Endothelial cell of umbilical vein (primary cell): ENCODE measurements at regions of chr10 and their contacts with region 1.

Region 1: GRCh38 chr10:69392481-69393000 is 24.2 kb downstream of the TACR2 start:
- DNase-seq: peak; percentile 78
- H3K4me3 ChIP-seq: no peak overlapping the region
- H3K27ac ChIP-seq: no peak overlapping the region
- H3K4me1 ChIP-seq: peaks cover 4% of the 10 kb centered on the region
- H3K27me3 ChIP-seq: no peaks in the 10 kb centered on the region
- CTCF ChIP-seq: peak; percentile 92 to 93
- POLR2A ChIP-seq: no peak

Region 2: GRCh38 chr10:69237528-69238159 is 154.9 kb before region 1 on chr10:
- CTCF ChIA-PET with region 1: interaction called, 103 read pairs
- POLR2A ChIA-PET with region 1: no interaction called
- dilution Hi-C with region 1: loop called (anchors 25 kb)
- intact Hi-C with region 1: loop called (anchors 1 kb)
- DNase-seq: peak; percentile 81
- H3K4me3 ChIP-seq: no peak overlapping the region
- H3K27ac ChIP-seq: no peak overlapping the region
- H3K4me1 ChIP-seq: peaks cover 16% of the 10 kb centered on the region
- H3K27me3 ChIP-seq: no peaks in the 10 kb centered on the region
- CTCF ChIP-seq: peak; percentile 81 to 90
- POLR2A ChIP-seq: no peak

Region 3: GRCh38 chr10:69318106-69318866 is 74.3 kb before region 1 on chr10:
- CTCF ChIA-PET with region 1: interaction called, 10 read pairs
- POLR2A ChIA-PET with region 1: no interaction called
- dilution Hi-C with region 1: no loop called
- intact Hi-C with region 1: loop called (anchors 1 kb)
- DNase-seq: peak; percentile 86
- H3K4me3 ChIP-seq: peak overlapping the region; percentile 47 to 92 (median 70)
- H3K27ac ChIP-seq: peak overlapping the region; percentile 84
- H3K4me1 ChIP-seq: peaks cover 48% of the 10 kb centered on the region
- H3K27me3 ChIP-seq: no peaks in the 10 kb centered on the region
- CTCF ChIP-seq: no peak
- POLR2A ChIP-seq: no peak

Region 4: DNA sequence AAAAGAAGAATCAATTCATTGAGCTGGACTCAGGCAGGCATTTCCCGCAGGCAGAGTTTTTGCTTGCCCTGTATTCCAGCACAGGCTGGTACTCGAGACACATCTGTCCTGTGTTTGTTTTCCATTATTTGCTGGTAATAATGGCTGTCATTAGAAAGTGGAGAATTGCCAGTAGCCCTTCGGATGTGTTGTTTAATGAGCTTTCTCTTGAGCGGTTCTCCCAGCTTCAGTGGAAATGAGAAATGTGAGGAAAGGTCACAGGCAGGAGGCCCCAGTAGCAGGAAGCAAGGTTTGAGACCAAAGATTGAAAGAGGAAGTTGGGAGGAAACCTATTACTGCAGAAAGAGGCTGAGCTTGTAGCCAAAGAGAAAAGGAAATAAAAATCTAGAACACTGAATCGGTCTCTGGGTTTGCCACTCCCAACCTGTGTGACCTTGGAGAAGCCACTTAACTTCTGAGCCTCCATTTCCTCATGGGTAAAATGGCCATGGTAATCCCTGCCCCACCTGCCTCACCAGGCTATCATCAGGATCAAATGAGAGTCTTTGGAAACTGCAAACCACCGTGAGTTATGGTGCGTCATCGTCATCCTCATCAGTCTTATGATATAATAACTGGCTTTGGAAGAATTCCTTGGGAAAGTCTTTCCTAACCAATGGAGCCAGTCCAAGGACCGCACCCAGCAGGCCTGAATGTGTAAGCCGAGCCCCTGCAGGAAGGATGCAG is 43.6 kb before region 1 on chr10:
- CTCF ChIA-PET with region 1: interaction called, 4 read pairs
- POLR2A ChIA-PET with region 1: no interaction called
- dilution Hi-C with region 1: no loop called
- intact Hi-C with region 1: loop called (anchors 5 kb)
- DNase-seq: peak; percentile 74
- H3K4me3 ChIP-seq: no peak overlapping the region
- H3K27ac ChIP-seq: peak overlapping the region; percentile 77
- H3K4me1 ChIP-seq: peaks cover 52% of the 10 kb centered on the region
- H3K27me3 ChIP-seq: no peaks in the 10 kb centered on the region
- CTCF ChIP-seq: no peak
- POLR2A ChIP-seq: no peak